Activated CD4-positive, alpha-beta T cell treated with anti-CD3 and anti-CD28 coated beads for 36 hours (primary cell): ENCODE measurements at regions of chr16 and their contacts with region 1.

Region 1: GRCh38 chr16:65671-66137 is 6.7 kb downstream of the RHBDF1 start:
- DNase-seq: peak; percentile 94
- ATAC-seq: peak; percentile 94
- H3K4me3 Mint-ChIP-seq: no peak overlapping the region
- H3K27ac Mint-ChIP-seq: no peak overlapping the region
- H3K4me1 Mint-ChIP-seq: no peaks in the 10 kb centered on the region
- H3K27me3 Mint-ChIP-seq: peaks cover 8% of the 10 kb centered on the region

Region 2: GRCh38 chr16:77807-78443 is 12.2 kb after region 1 on chr16 and contains the start of gene MPG:
- CTCF ChIA-PET with region 1: interaction called, 28 read pairs
- POLR2A ChIA-PET with region 1: interaction called, 6 read pairs
- intact Hi-C with region 1: no loop called
- DNase-seq: peak; percentile 91
- ATAC-seq: peak; percentile 87
- H3K4me3 Mint-ChIP-seq: peak within 1 kb of the TSS; percentile 87
- H3K27ac Mint-ChIP-seq: peak within 1 kb of the TSS; percentile 83
- H3K4me1 Mint-ChIP-seq: peaks cover 30% of the 10 kb centered on the region
- H3K27me3 Mint-ChIP-seq: peaks cover 10% of the 10 kb centered on the region
- total RNA-seq, gene MPG: 47.0 to 57.0 TPM

Region 3: DNA sequence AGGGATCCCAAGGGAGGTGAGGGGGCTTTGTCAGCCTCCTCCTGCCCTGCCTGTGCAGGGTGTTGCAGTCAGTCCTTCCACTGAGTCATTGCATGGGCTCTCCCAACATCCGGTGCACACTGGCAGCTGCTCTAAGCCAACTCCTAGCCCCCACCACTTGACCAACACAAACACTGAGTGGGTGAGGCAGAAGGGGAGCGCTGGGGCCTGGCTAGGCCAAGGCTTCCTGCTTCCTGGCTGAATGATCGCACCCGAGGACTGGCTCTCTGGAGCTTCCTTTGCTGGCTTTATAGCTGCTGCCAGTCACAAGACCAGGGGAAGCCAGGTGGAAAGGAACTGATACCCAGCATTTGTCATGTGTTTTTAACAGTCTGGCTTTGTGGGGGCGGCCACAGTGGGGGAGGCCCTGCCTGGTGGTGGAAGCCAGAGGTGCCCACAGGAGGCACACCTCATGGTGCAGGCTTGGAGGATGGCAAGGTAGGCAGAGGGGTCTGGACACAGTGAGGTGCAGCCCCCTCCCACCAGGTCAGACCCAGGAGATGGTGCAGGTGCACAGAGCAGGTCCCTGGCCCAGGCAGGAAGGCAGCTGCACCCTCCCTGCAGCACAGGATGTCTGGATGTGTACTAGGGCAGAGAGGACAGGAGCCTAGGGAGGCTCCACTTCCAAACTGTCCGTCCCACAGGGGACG is 19.2 kb after region 1 on chr16:
- CTCF ChIA-PET with region 1: interaction called, 214 read pairs
- POLR2A ChIA-PET with region 1: no interaction called
- intact Hi-C with region 1: no loop called
- DNase-seq: peak; percentile 85
- ATAC-seq: peak; percentile 92
- H3K4me3 Mint-ChIP-seq: peak overlapping the region; percentile 32
- H3K27ac Mint-ChIP-seq: peak overlapping the region; percentile 87
- H3K4me1 Mint-ChIP-seq: peaks cover 31% of the 10 kb centered on the region
- H3K27me3 Mint-ChIP-seq: no peaks in the 10 kb centered on the region

Region 4: DNA sequence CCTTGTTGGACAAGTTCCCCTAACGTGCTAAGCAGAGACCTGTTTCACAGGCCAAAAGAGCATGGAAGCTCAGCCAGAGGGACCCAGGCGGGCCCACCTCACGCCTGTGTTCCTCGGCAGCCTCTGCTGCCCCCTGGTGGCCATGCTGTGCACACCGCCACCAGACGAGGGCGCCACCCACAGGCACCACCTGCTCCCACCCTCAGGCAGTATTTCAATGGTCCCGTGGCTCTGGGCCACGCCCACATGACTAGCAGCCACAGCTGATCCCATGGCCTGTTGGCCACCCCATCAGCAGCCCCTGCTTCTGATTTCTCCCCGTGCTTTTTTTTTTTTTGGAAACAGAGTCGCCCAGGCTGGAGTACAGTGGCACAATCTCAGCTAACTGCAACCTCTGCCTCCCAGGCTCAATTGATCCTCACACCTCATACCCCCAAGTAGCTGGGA is 31.3 kb after region 1 on chr16:
- CTCF ChIA-PET with region 1: interaction called, 214 read pairs
- POLR2A ChIA-PET with region 1: interaction called, 3 read pairs
- intact Hi-C with region 1: loop called (anchors 1 kb)
- DNase-seq: peak; percentile 94
- ATAC-seq: peak; percentile 99
- H3K4me3 Mint-ChIP-seq: no peak overlapping the region
- H3K27ac Mint-ChIP-seq: no peak overlapping the region
- H3K4me1 Mint-ChIP-seq: no peaks in the 10 kb centered on the region
- H3K27me3 Mint-ChIP-seq: no peaks in the 10 kb centered on the region

Region 5: GRCh38 chr16:106623-107324 is 41.1 kb after region 1 on chr16:
- CTCF ChIA-PET with region 1: interaction called, 21 read pairs
- POLR2A ChIA-PET with region 1: no interaction called
- intact Hi-C with region 1: no loop called
- DNase-seq: peak; percentile 72
- ATAC-seq: peak; percentile 81
- H3K4me3 Mint-ChIP-seq: no peak overlapping the region
- H3K27ac Mint-ChIP-seq: no peak overlapping the region
- H3K4me1 Mint-ChIP-seq: no peaks in the 10 kb centered on the region
- H3K27me3 Mint-ChIP-seq: no peaks in the 10 kb centered on the region

Region 6: DNA sequence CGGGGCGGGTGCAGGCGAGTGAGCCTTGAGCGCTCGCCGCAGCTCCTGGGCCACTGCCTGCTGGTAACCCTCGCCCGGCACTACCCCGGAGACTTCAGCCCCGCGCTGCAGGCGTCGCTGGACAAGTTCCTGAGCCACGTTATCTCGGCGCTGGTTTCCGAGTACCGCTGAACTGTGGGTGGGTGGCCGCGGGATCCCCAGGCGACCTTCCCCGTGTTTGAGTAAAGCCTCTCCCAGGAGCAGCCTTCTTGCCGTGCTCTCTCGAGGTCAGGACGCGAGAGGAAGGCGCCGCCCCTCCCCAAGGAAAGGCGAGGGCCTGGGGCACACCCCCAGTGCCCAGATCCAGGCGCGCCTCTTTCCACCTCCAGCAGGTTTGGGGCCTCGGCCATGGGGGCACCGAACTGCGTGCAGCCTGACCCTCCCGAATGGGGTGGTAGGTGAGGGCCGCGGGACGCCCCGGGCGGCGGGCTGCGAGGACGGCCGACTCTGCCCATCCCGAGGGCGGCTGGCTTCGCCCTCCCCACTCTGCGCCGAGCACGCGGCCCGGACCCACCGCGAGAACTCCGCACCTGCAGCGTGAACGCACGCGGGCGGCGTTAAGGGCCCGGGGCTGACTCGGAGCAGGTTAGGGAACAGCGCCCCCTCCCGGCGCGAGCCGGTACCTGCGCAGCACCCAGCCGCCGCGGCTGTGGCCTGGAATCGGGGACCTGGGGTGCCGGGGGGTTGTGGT is 115.4 kb after region 1 on chr16:
- CTCF ChIA-PET with region 1: interaction called, 10 read pairs
- POLR2A ChIA-PET with region 1: no interaction called
- intact Hi-C with region 1: loop called in 1 of 2 experiments (anchors 1 kb)
- DNase-seq: peak; percentile 94
- ATAC-seq: peak; percentile 88
- H3K4me3 Mint-ChIP-seq: peak overlapping the region; percentile 39
- H3K27ac Mint-ChIP-seq: no peak overlapping the region
- H3K4me1 Mint-ChIP-seq: peaks cover 3% of the 10 kb centered on the region
- H3K27me3 Mint-ChIP-seq: peaks cover 21% of the 10 kb centered on the region

Region 7: DNA sequence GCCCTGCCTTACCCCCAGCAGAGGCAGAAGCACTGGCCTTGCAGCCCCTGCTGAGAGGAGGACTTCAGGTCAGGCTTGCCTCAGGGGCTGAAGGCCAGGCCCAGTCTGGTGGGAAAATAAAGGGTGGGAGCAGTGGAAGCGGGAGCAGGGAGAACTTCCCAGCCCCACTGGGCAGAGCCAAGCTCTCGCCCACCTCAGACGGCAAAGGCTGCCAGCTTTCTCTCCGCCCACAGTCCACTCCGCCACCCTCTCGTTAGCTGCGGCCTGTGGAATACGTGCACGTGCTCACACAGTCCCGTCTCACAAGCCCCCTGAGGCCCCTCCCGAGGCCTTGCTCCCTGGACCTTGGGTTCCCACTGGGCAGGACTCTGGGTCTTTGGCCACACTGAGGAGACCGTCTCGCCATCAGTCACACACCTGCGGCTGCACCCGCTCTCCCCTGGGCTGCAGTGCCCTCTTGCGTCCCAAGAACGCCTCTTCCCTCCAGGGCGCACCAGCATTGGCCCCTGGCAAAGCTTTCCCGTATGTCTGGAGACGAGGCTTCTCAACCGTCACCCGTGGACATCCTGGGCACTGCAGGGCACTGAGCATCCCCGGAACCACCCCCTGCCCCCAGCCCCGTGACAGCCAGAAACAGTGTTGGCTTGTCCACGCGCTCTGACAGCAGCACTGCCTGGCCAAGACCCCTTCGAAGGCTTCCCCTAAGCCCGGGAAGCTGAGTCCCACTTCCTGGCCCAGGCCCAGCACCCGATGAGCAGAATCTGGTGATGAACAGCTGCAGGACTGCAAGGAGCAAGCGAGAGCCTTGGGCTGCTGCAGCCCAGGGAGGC is 296.4 kb after region 1 on chr16:
- CTCF ChIA-PET with region 1: interaction called, 24 read pairs
- POLR2A ChIA-PET with region 1: no interaction called
- intact Hi-C with region 1: loop called in 1 of 2 experiments (anchors 1 kb)
- DNase-seq: peak; percentile 87
- ATAC-seq: peak; percentile 96
- H3K4me3 Mint-ChIP-seq: no peak overlapping the region
- H3K27ac Mint-ChIP-seq: no peak overlapping the region
- H3K4me1 Mint-ChIP-seq: peaks cover 5% of the 10 kb centered on the region
- H3K27me3 Mint-ChIP-seq: peaks cover 5% of the 10 kb centered on the region